ENCODE measurements at regions of chr1 and their contacts with region 1.

Region 1: DNA sequence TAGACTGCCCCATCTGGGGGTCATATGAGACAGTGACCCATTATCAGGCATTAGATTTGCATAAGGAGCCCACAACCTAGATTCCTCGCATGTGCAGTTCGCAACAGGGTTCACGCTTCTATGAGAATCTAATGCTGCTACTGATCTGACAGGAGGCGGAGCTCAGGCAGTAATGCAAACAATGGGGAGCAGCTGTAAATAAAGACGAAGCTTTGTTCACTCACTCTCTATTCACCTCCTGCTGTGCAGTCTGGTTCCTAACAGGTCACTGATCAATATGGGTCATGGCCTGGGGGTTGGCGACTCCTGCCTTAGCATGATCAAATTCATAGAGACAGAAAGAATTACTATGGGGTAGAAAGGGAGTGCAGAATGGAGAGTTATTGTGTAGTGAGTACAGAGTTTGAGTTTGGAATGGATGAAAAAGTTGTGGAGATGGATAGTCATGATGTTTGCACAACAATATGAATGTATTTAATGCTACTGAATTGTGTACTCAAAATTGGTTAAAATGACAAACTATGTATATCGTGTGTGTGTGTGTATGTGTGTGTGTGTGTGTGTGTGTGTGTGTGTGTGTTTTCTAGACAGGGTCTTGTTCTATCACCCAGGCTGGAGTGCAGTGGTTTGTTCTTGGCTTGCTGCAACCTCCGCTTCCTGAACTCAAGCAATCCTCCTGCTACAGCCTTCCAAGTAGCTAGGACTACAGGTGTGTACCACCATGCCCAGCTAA is 42.2 kb downstream of the BTF3L4 start:
- DNase-seq: no peak
- CTCF ChIP-seq: no peak

Region 2: GRCh38 chr1:51990478-51990965 is 107.8 kb before region 1 on chr1 and contains the start of gene RAB3B:
- in situ Hi-C with region 1: loop called (anchors 25 kb)
- DNase-seq: peak; percentile 86
- CTCF ChIP-seq: no peak